AG04449 (cell line): ENCODE measurements at regions of chr2 and their contacts with region 1.

Region 1: GRCh38 chr2:168118733-168119514 is 128.5 kb downstream of the STK39 start:
- DNase-seq: peak; percentile 51
- H3K4me3 ChIP-seq: no peak overlapping the region
- CTCF ChIP-seq: peak; percentile 44

Region 2: GRCh38 chr2:167264380-167264779 is 854.5 kb before region 1 on chr2:
- CTCF ChIA-PET with region 1: interaction called, 12 read pairs
- POLR2A ChIA-PET with region 1: no interaction called
- DNase-seq: no peak
- H3K4me3 ChIP-seq: no peak overlapping the region
- CTCF ChIP-seq: no peak

Region 3: GRCh38 chr2:167972020-167972419 is 146.9 kb before region 1 on chr2:
- CTCF ChIA-PET with region 1: interaction called, 276 read pairs
- POLR2A ChIA-PET with region 1: no interaction called
- DNase-seq: no peak
- H3K4me3 ChIP-seq: no peak overlapping the region
- CTCF ChIP-seq: no peak

Region 4: DNA sequence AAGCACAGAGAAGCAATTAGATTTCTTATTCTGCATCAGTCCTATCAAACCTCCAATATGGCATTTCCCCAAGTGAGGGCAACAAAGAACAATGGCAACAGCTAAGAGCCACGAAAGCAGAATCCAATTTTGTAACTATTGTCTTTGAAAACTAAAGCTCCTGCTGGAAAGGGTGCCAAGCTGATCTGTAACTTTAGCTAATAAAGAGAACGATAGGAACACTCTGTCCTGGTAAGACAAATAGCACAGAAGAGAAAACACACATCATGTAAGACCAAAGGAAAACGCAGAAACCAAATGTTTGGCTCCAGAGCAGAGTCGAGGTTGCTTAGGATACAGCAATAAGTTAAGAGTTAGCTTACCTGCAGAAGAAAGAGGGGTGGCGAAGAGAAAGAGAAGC is 32.1 kb before region 1 on chr2:
- CTCF ChIA-PET with region 1: interaction called, 10 read pairs
- POLR2A ChIA-PET with region 1: no interaction called
- DNase-seq: no peak
- H3K4me3 ChIP-seq: no peak overlapping the region
- CTCF ChIP-seq: no peak

Region 5: GRCh38 chr2:168136392-168136977 is 17.6 kb after region 1 on chr2:
- CTCF ChIA-PET with region 1: interaction called, 143 read pairs
- POLR2A ChIA-PET with region 1: no interaction called
- DNase-seq: no peak
- H3K4me3 ChIP-seq: no peak overlapping the region
- CTCF ChIP-seq: peak; percentile 44